ENCODE measurements at regions of chr1 and their contacts with region 1.

Region 1: GRCh38 chr1:113042285-113043143 is 30.5 kb upstream of the LRIG2 start:
- DNase-seq: peak; percentile 89 to 94
- H3K4me3 ChIP-seq: no peak overlapping the region; the same call in 1 of the 2 replicates
- H3K4me1 ChIP-seq: peaks cover 16% of the 10 kb centered on the region
- H3K27me3 ChIP-seq: no peaks in the 10 kb centered on the region

Region 2: DNA sequence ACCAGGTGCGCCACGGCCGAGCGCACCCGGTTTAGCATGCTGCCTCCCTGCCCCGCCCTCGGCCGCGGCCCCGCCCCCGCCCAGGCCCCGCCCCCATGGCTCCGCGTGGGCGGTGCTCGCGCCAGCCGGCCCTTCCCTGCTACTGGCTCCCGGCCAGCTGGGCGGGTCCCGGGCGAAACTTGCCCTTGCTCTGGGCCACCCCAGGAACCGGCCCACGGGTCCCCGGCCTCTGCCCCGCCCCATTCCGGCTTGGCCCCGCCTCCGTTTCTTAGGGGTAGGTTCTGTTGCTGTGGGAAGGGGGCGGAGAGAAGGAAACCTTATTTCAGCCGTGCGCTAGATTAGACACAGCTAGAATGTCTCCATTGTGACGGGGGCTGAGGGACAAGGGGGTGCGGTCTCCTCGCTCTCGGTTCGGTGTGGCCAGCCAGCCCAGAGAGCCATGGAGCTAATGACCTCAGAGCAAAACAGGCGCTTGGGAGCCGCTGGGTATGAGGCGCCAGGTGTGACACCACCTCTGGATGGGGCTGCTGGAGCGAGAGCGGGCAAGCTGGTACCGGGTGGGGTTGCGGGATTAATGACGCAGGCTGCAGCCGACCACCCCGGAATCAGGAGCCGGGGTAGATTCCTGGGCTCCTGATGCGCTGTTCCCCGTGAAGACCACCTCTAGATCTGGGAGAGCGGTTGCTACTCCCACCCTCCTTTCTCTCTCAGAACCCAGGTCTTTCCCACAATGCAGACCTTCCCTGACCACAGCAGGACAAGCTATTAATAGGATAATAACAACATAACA is 327.1 kb before region 1 on chr1 and contains the start of gene PPM1J:
- in situ Hi-C with region 1: loop called (anchors 10 kb)
- DNase-seq: peak; percentile 88 to 99
- H3K4me3 ChIP-seq: peak within 1 kb of the TSS; percentile 35
- H3K4me1 ChIP-seq: peaks cover 4% of the 10 kb centered on the region
- H3K27me3 ChIP-seq: peaks cover 26% of the 10 kb centered on the region

Region 3: DNA sequence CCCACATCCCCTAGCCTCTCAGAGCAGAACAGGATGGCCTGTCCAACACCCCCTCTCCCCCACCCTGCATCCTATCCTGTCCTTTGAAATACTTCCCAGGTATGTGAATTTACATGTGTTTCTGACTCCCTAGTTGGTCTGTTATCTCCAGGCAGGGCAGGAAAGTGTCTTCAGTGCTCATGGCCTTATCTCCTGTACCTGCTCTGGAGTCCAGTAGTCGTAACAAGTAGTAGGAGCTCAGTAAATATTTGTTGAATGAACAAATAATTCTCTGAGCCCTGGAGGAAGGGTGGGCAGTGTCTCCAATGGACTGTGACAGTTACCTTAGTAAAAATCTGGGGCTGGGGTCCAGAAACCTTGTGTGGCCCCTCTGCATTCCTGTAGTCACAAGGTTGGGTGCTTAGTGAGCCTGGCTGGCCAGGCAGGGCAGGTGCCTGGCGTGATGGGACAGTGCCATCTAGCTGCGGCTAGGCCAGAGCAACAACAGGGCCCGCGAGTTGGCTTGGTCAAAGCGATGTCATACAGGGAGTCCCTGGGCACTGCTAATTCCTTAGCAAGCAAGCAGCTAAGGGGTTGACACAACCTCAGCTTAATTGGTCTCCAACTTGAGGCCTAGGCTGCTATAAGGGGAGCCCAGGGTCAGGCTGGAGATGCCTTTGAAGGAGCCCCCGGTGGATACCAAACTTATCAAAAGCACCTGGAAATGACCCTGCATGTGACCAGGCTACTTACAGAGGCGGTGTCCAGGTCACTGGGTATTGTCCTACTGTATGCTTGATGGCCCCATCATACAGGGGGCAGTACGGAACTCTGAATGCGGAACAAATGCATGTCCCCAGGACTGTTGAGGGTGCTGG is 238.4 kb before region 1 on chr1:
- in situ Hi-C with region 1: loop called (anchors 10 kb)
- DNase-seq: peak; percentile 66 to 82
- H3K4me3 ChIP-seq: no peak overlapping the region
- H3K4me1 ChIP-seq: no peaks in the 10 kb centered on the region
- H3K27me3 ChIP-seq: peaks cover 25% of the 10 kb centered on the region

Region 4: DNA sequence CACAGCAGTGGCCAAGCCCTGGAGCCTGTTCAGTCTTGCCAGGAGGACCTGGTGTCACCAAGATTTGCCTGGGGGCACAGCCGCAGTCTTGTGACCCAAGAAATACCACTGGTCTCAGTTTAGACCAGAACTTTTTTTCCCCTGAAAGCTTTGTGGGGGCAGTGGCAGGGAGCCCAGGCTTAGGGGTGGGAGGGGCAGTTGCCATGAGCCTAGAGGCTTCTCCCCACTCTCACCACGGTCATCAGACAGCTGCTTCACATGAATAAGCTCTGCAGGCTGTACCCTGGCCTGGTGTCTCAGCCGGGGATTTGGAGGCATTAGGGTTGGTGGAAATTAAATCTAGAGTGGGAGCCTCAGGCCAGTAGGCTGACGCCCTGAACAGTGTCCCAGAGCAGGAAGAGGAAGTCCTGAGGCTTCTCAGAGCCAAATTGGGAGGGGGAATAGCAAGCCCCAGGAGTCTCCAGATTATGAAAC is 160.2 kb before region 1 on chr1:
- in situ Hi-C with region 1: loop called (anchors 5 kb)
- DNase-seq: no peak
- H3K4me3 ChIP-seq: no peak overlapping the region
- H3K4me1 ChIP-seq: peaks cover 4% of the 10 kb centered on the region
- H3K27me3 ChIP-seq: no peaks in the 10 kb centered on the region

Region 5: DNA sequence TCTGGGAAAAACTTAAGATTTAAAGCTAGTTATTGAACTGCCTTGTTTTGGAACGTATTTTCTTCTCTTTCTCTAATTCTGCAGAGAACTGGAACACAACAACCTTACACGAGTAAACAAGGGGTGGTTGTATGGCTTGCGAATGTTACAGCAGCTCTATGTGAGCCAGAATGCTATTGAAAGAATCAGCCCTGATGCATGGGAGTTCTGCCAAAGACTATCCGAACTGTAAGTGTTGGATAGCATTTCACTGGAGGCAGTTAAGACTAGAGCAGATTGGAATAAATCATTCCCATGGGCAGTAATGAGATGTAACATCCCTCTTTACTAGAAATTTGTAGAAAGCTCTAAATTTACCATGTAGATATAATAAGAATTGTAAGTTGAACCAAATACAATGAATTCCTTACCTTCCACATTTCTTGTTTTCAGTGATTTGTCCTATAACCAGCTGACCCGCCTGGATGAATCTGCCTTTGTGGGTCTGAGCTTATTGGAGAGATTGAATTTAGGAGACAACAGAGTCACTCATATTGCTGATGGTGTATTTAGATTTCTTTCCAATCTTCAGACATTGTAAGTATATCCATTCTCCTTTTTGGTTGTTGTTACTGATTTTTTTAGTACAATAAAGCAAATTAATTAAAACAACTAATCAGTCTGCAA is 53.4 kb after region 1 on chr1:
- in situ Hi-C with region 1: no loop called
- DNase-seq: no peak
- H3K4me3 ChIP-seq: no peak overlapping the region
- H3K4me1 ChIP-seq: peaks cover 3% of the 10 kb centered on the region; the same call in 1 of the 2 replicates
- H3K27me3 ChIP-seq: no peaks in the 10 kb centered on the region